PC-3 (cell line): ENCODE measurements at regions of chr10 and their contacts with region 1.

Region 1: GRCh38 chr10:46069771-46070463 is 23.8 kb upstream of the MSMB start:
- DNase-seq: no peak
- ATAC-seq: no peak
- H3K4me3 ChIP-seq: no peak overlapping the region
- H3K27ac ChIP-seq: no peak overlapping the region
- H3K4me1 ChIP-seq: no peaks in the 10 kb centered on the region
- H3K27me3 ChIP-seq: no peaks in the 10 kb centered on the region
- CTCF ChIP-seq: no peak

Region 2: DNA sequence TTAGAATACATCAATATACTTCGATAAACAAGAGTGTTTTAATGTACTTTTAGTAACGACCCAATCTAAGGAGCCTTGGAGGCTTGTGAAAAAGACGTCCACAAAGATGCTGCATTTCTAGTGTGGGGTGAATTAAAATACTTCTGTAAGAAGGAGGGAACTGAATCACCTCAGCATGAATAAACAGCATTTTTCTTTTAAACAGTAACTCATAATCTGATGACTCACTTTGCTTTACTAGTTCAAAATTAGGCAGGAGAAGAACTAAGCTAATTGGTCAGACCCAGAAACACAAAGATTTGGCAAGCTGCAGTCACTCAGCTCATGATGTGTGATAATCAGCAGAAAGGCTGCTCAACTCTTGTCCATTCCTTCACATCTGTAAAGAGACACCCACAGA is 63.7 kb before region 1 on chr10:
- CTCF ChIA-PET with region 1: no interaction called
- POLR2A ChIA-PET with region 1: interaction called, 14 read pairs
- intact Hi-C with region 1: no loop called
- DNase-seq: peak; percentile 61
- ATAC-seq: peak; percentile 86
- H3K4me3 ChIP-seq: no peak overlapping the region
- H3K27ac ChIP-seq: no peak overlapping the region
- H3K4me1 ChIP-seq: peaks cover 15% of the 10 kb centered on the region
- H3K27me3 ChIP-seq: no peaks in the 10 kb centered on the region
- CTCF ChIP-seq: no peak